BJ (cell line): ENCODE measurements at regions of chr15 and their contacts with region 1.

Region 1: DNA sequence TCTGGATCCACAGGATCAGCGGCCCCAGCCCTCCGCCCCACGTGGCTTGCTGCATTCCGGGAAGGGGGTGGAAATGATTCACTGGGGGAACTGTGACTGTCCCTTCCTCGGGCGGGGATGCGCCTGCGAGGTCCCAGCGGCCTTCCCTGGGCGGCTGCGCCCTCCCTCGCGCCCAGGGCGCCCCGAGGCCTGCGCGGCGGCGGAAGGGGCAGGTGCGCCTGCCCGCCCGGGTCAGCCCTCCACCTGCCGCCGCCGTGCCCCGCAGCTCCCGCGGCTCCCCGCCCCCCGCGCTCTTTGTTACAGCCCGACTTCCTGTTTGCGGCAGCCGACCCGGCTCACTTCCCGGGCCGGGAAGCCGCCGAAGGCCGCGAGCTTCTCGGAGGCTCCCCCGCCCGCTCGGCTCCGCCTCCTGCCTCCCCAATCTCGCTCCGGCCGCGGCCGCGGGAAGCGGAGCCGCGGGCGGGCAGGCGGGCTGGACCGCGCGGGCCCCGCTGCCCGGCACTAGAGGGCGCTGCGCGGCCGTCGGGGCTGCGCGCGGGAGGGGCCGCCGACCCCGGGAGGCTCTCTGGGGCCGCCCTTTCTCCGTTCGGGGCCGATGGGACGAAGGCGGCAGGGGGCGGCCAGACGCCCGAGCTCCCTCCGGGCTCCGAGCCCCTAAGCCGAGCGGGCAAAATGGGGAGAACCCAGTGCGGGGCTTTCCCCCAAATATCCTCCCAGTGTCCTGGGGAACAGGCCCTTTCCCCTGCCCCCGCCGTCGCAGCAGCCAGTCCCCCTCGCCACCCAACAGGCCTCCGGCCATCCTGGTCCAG is 11.5 kb upstream of the CHAC1 start:
- DNase-seq: no peak
- H3K4me3 ChIP-seq: peak overlapping the region; percentile 50
- H3K27me3 ChIP-seq: no peaks in the 10 kb centered on the region
- CTCF ChIP-seq: peak; percentile 27

Region 2: DNA sequence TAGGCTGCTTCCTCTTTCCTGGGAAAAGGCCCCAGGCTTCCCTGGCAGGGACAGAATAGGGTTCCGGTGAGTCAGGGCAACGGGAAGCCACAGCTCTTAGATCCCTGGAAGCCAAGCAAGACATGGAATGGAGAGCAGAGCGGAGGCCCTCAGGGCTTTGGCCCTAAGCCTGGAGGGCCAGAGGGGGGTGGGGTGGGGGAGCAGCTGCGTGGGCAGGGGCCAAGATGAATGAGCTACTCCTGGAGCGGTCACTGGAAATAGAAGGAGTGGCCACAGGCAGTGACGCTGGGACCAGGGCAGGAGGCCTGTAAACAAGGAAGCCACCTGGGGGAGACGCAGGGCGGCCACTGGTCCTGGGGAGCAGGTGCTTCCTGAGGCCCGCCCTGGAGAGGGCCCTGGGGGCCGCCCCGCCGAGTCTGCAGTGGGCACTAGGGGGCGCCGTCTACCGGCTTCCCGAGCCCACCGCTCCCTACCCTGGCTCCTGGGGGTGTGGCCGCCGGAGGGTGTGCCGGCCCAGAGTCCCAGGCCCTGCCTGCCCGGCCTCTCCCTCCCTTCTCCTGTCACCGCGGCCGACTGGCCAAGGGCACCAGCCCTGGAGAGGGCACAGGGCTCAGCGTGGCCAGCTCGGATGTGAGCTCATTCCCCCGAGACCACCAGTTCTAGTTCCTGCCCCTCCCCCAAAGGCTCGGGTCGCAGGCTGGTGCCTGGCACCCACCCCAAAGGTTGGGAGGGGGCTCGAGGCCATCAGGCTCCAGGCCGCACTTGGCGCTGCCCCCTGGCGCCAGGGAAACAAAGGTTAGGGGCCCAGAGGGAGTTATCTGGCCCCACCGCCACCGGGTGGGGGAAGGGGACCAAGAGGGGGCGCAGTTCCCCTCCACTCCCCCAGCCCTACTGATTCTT is 35.4 kb before region 1 on chr15:
- CTCF ChIA-PET with region 1: interaction called, 83 read pairs
- POLR2A ChIA-PET with region 1: interaction called, 3 read pairs
- DNase-seq: peak; percentile 92
- H3K4me3 ChIP-seq: peak overlapping the region; percentile 25
- H3K27me3 ChIP-seq: no peaks in the 10 kb centered on the region
- CTCF ChIP-seq: peak; percentile 86

Region 3: DNA sequence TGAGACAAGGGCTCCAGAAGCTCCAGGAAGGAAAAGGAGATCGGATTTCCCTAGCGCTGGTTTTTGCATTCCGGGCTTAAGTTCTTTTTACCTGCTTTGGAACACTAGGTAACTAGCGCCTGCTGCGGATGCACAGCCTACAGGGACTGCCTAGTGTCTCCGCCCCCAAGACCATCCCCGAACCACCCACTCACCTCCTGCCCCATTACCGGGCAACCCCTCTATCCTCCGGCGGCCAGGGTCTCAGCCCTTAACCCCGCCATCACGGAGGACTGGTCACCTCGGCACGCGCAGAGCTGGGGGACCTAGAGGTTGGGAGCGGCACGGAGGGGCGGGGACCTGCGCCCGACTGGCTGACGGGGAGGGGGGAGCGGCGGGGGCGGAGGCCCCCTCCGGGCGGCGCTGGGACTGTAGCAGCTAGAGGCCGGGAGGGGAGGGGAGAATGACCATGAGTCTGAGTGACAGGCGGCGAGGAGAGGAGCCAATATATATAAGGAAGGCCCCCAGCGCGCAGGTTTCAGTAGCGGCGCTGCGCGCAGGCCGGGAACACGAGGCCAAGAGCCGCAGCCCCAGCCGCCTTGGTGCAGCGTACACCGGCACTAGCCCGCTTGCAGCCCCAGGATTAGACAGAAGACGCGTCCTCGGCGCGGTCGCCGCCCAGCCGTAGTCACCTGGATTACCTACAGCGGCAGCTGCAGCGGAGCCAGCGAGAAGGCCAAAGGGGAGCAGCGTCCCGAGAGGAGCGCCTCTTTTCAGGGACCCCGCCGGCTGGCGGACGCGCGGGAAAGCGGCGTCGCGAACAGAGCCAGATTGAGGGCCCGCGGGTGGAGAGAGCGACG is 12.7 kb before region 1 on chr15 and contains the start of gene DLL4:
- CTCF ChIA-PET with region 1: interaction called, 89 read pairs
- POLR2A ChIA-PET with region 1: no interaction called
- DNase-seq: no peak
- H3K4me3 ChIP-seq: peak within 1 kb of the TSS; percentile 51
- H3K27me3 ChIP-seq: peaks cover 33% of the 10 kb centered on the region
- CTCF ChIP-seq: no peak
- polyA plus RNA-seq, gene DLL4: 0.32 and 0.47 TPM in 2 replicates

Region 4: DNA sequence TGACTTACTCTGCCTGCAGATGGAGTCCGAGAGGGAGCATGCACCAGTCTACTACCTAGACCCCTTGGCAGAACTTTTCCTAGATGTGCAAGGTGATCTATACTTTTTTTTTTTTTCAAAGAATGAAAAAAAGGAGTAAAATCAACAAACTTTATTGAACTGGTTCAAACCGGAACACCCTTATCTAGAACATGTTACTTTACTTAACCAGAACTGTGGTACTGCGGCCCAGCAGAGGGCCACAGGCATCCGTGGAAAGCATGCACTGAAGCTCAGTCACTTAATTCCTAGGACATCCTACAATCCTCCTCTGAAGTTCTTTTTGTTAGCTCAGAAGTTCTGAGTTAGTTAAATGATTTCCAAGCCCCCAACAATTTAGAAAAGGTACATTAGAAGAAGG is 33.1 kb after region 1 on chr15:
- CTCF ChIA-PET with region 1: interaction called, 12 read pairs
- POLR2A ChIA-PET with region 1: no interaction called
- DNase-seq: no peak
- H3K4me3 ChIP-seq: no peak overlapping the region
- H3K27me3 ChIP-seq: no peaks in the 10 kb centered on the region
- CTCF ChIP-seq: no peak

Region 5: DNA sequence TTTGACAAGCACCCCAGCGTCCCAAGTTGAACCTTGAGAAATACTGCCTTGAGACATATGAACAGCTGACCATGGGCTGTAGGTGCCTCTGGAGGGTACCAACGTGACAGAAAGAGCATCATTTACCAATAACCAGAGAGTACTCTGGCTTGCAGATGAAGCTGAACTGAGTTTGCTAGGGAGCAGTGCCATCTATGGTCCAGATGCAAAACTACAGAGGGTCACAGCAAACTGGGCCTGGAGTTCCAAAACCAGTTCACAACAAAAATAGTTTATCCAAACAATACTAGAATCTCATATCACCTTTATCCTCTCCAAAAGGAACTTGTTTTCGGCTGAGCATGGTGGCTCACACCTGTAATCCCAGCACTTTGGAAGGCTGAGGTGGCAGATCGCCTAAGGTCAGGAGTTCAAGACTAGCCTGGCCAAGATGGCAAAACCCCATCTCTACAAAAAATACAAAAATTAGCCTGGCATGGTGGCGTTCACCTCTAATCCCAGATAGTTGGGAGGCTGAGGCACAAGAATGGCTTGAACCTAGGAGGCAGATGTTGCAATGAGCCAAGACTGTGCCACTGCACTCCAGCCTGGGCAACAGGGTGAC is 80.9 kb after region 1 on chr15:
- CTCF ChIA-PET with region 1: interaction called, 142 read pairs
- POLR2A ChIA-PET with region 1: no interaction called
- DNase-seq: no peak
- H3K4me3 ChIP-seq: no peak overlapping the region
- H3K27me3 ChIP-seq: no peaks in the 10 kb centered on the region
- CTCF ChIP-seq: peak; percentile 88